ENCODE measurements at regions of chr5 and their contacts with region 1.

Region 1: DNA sequence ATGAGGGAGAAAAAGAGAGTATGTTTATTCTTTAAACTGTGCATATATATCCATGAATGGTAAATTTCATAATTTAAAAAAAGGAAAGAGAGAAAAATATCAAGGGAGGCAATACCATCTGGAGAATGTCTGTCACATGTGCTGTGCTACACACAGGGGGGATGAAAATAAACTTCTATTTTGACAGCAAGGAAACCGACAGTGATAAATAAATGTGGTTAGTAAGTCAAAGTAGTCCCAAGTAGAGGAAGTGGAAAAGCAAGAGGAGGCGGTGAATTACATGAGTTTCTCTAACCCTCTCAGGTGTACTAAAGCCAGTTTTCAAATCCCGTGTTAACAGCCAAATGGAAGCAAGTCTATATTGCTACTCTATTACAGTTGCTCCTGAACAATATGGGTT is 83.3 kb downstream of the ICE1 start:
- DNase-seq: no peak
- ATAC-seq: no peak
- H3K4me3 ChIP-seq: no peak overlapping the region
- H3K27ac ChIP-seq: no peak overlapping the region
- H3K4me1 ChIP-seq: no peaks in the 10 kb centered on the region
- H3K27me3 ChIP-seq: no peaks in the 10 kb centered on the region
- CTCF ChIP-seq: no peak
- POLR2A ChIP-seq: no peak

Region 2: DNA sequence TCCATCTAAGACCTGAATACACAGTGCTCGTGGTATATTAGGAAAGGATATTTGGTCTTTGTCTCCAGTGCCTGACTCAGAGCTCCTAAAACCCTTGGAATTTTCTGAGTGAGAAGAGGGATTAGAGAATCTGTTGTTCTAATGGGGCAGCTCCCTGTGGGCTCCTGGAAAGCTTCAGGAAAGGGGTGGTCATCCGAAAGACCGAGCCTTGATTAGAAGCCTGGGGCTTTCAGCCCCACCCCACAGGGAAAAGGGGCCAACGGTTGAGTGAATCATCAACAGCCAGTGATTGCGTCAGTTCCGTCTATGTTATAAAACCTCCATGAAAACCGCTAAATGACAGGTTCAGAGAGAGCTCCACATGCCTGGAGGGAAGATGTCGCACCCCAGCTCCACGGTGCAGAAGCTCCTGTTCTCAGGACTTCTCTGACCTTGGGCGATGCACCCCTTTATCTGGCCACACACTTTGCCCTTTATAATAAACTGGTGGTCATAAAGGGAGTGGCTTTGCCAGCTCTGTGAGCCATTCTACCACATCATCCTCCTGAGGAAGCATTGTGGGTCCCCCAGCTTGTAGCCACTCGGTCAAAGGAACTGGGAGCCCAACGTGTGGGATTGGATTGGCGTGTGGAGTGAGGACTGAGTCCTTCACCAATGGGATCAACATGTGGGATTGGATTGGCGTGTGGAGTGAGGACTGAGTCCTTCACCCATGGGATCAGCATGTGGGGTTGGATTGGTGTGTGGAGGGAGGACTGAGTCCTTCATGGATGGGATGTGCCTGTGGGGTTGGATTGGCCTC is 154.3 kb before region 1 on chr5:
- in situ Hi-C with region 1: no loop called
- intact Hi-C with region 1: no loop called
- DNase-seq: no peak
- ATAC-seq: no peak
- H3K4me3 ChIP-seq: no peak overlapping the region
- H3K27ac ChIP-seq: no peak overlapping the region
- H3K4me1 ChIP-seq: no peaks in the 10 kb centered on the region
- H3K27me3 ChIP-seq: no peaks in the 10 kb centered on the region
- CTCF ChIP-seq: no peak
- POLR2A ChIP-seq: no peak

Region 3: GRCh38 chr5:5374009-5374715 is 131.7 kb before region 1 on chr5:
- in situ Hi-C with region 1: no loop called
- intact Hi-C with region 1: no loop called
- DNase-seq: no peak
- ATAC-seq: no peak
- H3K4me3 ChIP-seq: no peak overlapping the region
- H3K27ac ChIP-seq: no peak overlapping the region
- H3K4me1 ChIP-seq: no peaks in the 10 kb centered on the region
- H3K27me3 ChIP-seq: no peaks in the 10 kb centered on the region
- CTCF ChIP-seq: no peak
- POLR2A ChIP-seq: no peak

Region 4: GRCh38 chr5:5544094-5544663 is 38.4 kb after region 1 on chr5:
- in situ Hi-C with region 1: no loop called
- intact Hi-C with region 1: no loop called
- DNase-seq: no peak
- ATAC-seq: no peak
- H3K4me3 ChIP-seq: no peak overlapping the region
- H3K27ac ChIP-seq: no peak overlapping the region
- H3K4me1 ChIP-seq: no peaks in the 10 kb centered on the region
- H3K27me3 ChIP-seq: no peaks in the 10 kb centered on the region
- CTCF ChIP-seq: no peak
- POLR2A ChIP-seq: no peak

Region 5: DNA sequence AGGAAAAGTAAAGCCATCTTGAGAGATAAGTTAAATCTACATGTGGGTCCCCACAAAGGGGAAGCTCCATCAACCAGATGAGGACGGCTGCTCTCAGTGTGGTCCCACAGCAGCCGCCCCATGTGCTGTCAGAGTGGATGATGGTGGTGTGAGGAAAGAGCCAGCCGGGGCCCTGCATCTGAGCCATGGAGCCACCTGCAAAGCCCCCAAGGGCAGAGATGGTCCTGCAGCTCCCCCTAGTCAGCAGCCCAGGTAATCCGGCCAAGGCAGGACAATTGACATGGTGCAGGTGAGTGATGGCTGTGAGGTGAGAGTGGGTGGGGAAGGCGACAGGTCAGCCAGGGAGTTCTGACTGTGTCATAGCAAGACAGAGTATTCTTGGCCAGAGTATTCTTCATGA is 375.5 kb after region 1 on chr5:
- in situ Hi-C with region 1: loop called in 1 of 4 experiments (anchors 10 kb)
- intact Hi-C with region 1: no loop called
- DNase-seq: no peak
- ATAC-seq: no peak
- H3K4me3 ChIP-seq: no peak overlapping the region
- H3K27ac ChIP-seq: no peak overlapping the region
- H3K4me1 ChIP-seq: no peaks in the 10 kb centered on the region
- H3K27me3 ChIP-seq: no peaks in the 10 kb centered on the region
- CTCF ChIP-seq: peak in 1 of 5 experiments; percentile 12
- POLR2A ChIP-seq: no peak

Measured in gastrocnemius medialis (tissue), 4 donors.